Ovary (tissue), 10 donors: ENCODE measurements at regions of chr10 and their contacts with region 1.

Region 1: GRCh38 chr10:124935946-124936345 is 6.0 kb upstream of the ZRANB1 start:
- DNase-seq: no peak
- H3K4me3 ChIP-seq: no peak overlapping the region
- H3K27ac ChIP-seq: no peak overlapping the region
- H3K4me1 ChIP-seq: peaks cover 5% of the 10 kb centered on the region
- H3K27me3 ChIP-seq: no peaks in the 10 kb centered on the region
- CTCF ChIP-seq: no peak
- EP300 ChIP-seq: no peak
- POLR2A ChIP-seq: no peak

Region 2: GRCh38 chr10:124992462-124993344 is 56.8 kb after region 1 on chr10:
- intact Hi-C with region 1: loop called in 1 of 4 experiments (anchors 10 kb)
- DNase-seq: peak; percentile 84 to 93 (median 87)
- H3K4me3 ChIP-seq: no peak overlapping the region
- H3K27ac ChIP-seq: no peak overlapping the region
- H3K4me1 ChIP-seq: peaks cover 4% of the 10 kb centered on the region
- H3K27me3 ChIP-seq: no peaks in the 10 kb centered on the region
- CTCF ChIP-seq: peak; percentile 72 to 87 (median 76)
- EP300 ChIP-seq: no peak
- POLR2A ChIP-seq: no peak

Region 3: DNA sequence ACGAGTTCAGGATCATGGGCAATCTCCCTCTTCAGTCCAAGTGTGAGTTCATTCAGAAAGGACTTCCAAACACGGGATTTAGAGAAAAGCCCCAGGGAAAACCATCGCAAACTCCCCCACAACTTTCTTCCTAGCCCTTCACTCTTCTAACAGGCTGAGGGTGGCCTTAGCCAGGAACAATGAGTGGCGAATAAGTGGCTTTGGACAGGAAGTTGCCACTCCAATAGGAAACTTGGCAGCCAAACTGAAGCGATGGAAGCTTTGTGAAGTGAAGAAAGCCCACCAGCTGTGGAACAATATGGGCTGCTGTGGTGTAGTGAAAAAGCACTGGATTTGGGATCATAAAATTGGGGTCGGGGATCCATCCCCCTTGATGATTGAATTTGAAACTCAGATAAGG is 553.8 kb after region 1 on chr10:
- intact Hi-C with region 1: no loop called
- DNase-seq: no peak
- H3K4me3 ChIP-seq: no peak overlapping the region
- H3K27ac ChIP-seq: no peak overlapping the region
- H3K4me1 ChIP-seq: peaks cover 2% of the 10 kb centered on the region
- H3K27me3 ChIP-seq: no peaks in the 10 kb centered on the region
- CTCF ChIP-seq: no peak
- EP300 ChIP-seq: no peak
- POLR2A ChIP-seq: no peak